ENCODE measurements at regions of chr15 and their contacts with region 1.

Region 1: DNA sequence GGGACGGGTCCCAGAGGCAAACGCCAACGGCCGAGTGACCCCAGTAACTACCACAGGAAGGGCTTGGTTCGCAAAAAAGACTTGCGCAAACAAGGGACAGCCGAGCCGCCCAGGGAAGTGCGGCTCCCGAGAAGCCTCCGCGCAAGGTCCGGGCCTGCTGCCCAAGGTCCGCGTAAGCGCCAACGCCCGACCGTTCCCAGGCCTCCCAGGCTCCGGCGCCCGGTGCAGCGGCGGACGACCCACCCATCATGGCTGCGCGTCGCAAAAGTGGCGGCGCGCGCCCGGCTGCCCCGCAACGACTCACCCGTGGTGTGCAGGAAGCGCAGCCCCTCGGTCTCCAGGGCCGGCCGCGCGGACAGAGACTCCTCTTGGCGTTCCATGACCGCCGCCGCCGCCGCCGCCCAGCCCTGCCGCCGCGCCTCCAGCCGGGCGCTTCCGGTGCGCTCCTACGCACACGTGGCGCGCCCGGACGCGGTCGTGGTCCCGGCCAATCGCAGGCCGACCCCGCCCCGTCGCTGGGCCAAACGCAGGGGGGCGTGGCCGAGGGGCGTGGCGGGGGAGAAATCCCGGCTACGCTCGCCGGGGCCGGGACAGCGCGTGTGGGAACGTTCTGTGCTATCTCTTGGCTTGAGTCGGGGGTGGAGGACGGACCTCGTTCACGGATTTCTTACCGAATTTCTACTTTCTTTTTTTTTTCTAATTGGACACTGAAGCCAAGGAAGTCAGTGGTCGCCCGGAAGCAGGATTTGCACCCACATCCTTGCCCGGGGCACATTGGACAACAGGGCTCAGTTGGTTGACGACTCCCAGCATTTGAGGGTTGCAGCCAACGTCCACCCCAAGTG is at the start of gene SELENOS:
- DNase-seq: peak; percentile 91 to 97 (median 95)
- H3K4me3 ChIP-seq: peak within 1 kb of the TSS; percentile 98
- H3K27ac ChIP-seq: peak within 1 kb of the TSS; percentile 57 to 77
- H3K4me1 ChIP-seq: peaks cover 3% of the 10 kb centered on the region
- H3K27me3 ChIP-seq: no peaks in the 10 kb centered on the region
- CTCF ChIP-seq: peak in 1 of 3 donors; percentile 20
- EP300 ChIP-seq: no peak
- POLR2A ChIP-seq: peak; percentile 96
- total RNA-seq, gene SELENOS: 36.9 to 61.7 (median 42.7) TPM

Region 2: GRCh38 chr15:100602064-100602822 is 675.0 kb before region 1 on chr15 and contains the starts of genes ASB7 and LINS1:
- intact Hi-C with region 1: loop called in 1 of 4 experiments (anchors 10 kb)
- DNase-seq: peak; percentile 100
- H3K4me3 ChIP-seq: peak within 1 kb of the TSS; percentile 92
- H3K27ac ChIP-seq: peak within 1 kb of the TSS; percentile 25 to 78
- H3K4me1 ChIP-seq: peaks cover 6% of the 10 kb centered on the region
- H3K27me3 ChIP-seq: no peaks in the 10 kb centered on the region
- CTCF ChIP-seq: no peak
- EP300 ChIP-seq: peak; percentile 78
- POLR2A ChIP-seq: no peak
- total RNA-seq, gene ASB7: 6.7 to 13.1 (median 11.2) TPM
- total RNA-seq, gene LINS1: 16.4 to 35.9 (median 20.7) TPM